ENCODE measurements at regions of chr17 and their contacts with region 1.

Region 1: DNA sequence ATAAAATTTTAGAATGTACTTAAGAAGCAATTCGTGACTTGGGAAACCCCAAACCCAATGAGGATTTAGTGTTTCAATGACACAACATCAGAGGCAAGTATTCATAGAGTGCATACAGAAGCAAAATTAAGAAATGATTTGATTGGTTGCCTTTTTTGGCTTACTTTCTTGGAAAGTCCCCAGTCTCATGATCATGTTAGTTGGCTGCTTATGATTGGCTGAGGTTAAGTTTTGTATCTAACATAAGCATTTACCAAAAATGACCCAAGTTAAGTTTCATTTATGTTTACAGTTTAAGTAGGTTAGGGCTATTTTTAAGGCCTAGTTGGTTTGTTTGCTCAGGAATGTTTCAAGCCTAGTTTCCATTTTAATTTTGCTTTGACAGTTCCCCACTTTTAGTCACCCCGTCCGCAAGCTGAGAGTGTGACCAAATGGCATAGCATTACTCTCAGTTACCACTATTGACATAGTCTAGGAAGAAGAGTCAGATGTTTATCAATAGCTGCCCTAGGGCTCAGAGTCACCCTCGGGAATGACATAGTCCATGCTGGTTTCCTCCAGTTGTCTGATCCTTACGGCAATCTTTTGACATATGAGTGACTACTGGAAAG is 36.2 kb downstream of the DGKE start:
- H3K4me3 ChIP-seq: no peak overlapping the region
- H3K27ac ChIP-seq: no peak overlapping the region
- H3K4me1 ChIP-seq: no peaks in the 10 kb centered on the region
- CTCF ChIP-seq: no peak

Region 2: GRCh38 chr17:56833809-56834379 is 36.3 kb before region 1 on chr17 and contains the starts of genes C17orf67 and DGKE:
- CTCF ChIA-PET with region 1: interaction called, 3 read pairs
- POLR2A ChIA-PET with region 1: interaction called, 11 read pairs
- H3K4me3 ChIP-seq: peak within 1 kb of the TSS; percentile 69
- H3K27ac ChIP-seq: peak within 1 kb of the TSS; percentile 95
- H3K4me1 ChIP-seq: peaks cover 23% of the 10 kb centered on the region
- CTCF ChIP-seq: no peak

Region 3: GRCh38 chr17:56908001-56908542 is 37.9 kb after region 1 on chr17:
- CTCF ChIA-PET with region 1: no interaction called
- POLR2A ChIA-PET with region 1: no interaction called
- H3K4me3 ChIP-seq: no peak overlapping the region
- H3K27ac ChIP-seq: no peak overlapping the region
- H3K4me1 ChIP-seq: no peaks in the 10 kb centered on the region; the same call in 1 of the 2 replicates
- CTCF ChIP-seq: no peak

Measured in HEK293 (cell line).